Prostate gland (tissue), 2 donors: ENCODE measurements at regions of chr20 and their contacts with region 1.

Region 1: GRCh38 chr20:10553326-10553984 is 118.3 kb downstream of the SLX4IP start:
- DNase-seq: peak; percentile 72
- H3K4me3 ChIP-seq: no peak overlapping the region
- H3K27ac ChIP-seq: no peak overlapping the region
- H3K4me1 ChIP-seq: no peaks in the 10 kb centered on the region
- H3K27me3 ChIP-seq: no peaks in the 10 kb centered on the region
- CTCF ChIP-seq: peak; percentile 53 to 85 (median 78)
- POLR2A ChIP-seq: no peak

Region 2: DNA sequence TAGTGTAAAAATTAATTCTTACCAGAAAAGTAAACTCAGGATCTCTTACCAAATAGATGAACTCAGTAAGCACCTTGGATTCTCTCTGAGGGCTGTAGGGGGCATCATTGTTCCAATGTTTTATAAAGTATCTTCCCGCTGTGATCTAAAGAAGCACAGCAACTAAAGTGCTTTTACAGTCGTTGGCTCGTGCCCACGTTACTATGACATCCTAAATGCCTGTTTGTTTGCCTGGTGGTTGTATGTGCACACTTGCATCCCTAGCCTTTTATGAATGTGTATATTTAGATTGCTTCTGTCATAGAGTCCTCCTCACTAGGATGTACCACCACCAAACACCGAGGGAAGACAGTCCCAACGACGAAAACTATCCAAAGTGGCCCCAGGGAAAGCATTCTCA is 83.9 kb before region 1 on chr20:
- intact Hi-C with region 1: loop called (anchors 5 kb)
- DNase-seq: peak; percentile 85
- H3K4me3 ChIP-seq: no peak overlapping the region
- H3K27ac ChIP-seq: no peak overlapping the region
- H3K4me1 ChIP-seq: no peaks in the 10 kb centered on the region
- H3K27me3 ChIP-seq: no peaks in the 10 kb centered on the region
- CTCF ChIP-seq: peak in 3 of 4 experiments; percentile 71 to 85 (median 80)
- POLR2A ChIP-seq: no peak

Region 3: GRCh38 chr20:10596726-10597125 is 43.3 kb after region 1 on chr20:
- intact Hi-C with region 1: loop called (anchors 5 kb)
- DNase-seq: no peak
- H3K4me3 ChIP-seq: no peak overlapping the region
- H3K27ac ChIP-seq: no peak overlapping the region
- H3K4me1 ChIP-seq: peaks cover 3% of the 10 kb centered on the region
- H3K27me3 ChIP-seq: no peaks in the 10 kb centered on the region
- CTCF ChIP-seq: no peak
- POLR2A ChIP-seq: no peak

Region 4: DNA sequence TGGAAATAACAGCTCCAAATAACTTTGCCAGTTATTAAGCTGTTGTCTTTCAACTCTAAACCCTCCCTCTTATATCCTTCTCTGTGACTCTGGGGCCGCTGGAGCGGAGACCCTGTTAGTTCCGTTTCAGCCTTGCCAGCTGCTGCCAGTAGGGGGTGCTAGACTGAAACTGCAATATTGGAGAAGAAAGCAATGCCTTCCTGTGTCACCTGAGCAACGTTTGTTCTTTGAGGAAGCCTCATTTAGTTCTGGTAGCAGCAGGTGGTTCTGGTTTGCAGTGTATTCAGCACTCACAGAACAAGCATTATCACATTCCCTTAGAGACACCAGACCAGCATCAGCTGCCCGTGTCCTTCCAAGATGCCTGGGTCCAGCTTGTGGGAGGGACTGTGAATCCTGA is 143.2 kb after region 1 on chr20:
- intact Hi-C with region 1: no loop called
- DNase-seq: no peak
- H3K4me3 ChIP-seq: no peak overlapping the region
- H3K27ac ChIP-seq: no peak overlapping the region
- H3K4me1 ChIP-seq: no peaks in the 10 kb centered on the region
- H3K27me3 ChIP-seq: no peaks in the 10 kb centered on the region
- CTCF ChIP-seq: peak in 2 of 4 experiments; percentile 18 to 43
- POLR2A ChIP-seq: no peak

Region 5: GRCh38 chr20:11204926-11205768 is 651.7 kb after region 1 on chr20:
- intact Hi-C with region 1: loop called (anchors 10 kb)
- DNase-seq: peak; percentile 72
- H3K4me3 ChIP-seq: no peak overlapping the region
- H3K27ac ChIP-seq: peak overlapping the region in 1 of 2 donors; percentile 6
- H3K4me1 ChIP-seq: peaks cover 3% of the 10 kb centered on the region
- H3K27me3 ChIP-seq: no peaks in the 10 kb centered on the region
- CTCF ChIP-seq: peak; percentile 20 to 76 (median 70)
- POLR2A ChIP-seq: no peak

Region 6: DNA sequence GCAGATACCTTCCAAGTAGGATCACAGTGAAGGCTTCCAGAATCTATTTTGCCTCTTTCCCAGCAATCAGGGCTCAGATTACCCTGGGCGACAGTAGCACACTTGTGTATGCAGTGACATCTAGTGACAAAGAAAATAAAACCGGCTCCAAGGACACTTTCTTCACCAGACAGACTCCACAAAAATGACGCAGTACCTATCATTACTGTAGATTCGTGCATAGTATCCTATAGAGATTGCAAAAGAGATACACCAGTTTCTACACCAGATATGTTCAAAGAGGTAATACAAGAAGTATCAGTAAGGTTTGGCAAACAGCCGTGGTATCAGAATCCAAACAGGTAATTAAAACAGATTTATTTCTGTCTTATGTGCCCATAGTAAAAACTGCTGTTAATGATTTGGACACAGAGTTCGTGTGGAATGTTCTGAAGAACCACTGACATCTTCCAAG is 720.7 kb after region 1 on chr20:
- intact Hi-C with region 1: loop called (anchors 5 kb)
- DNase-seq: peak; percentile 54
- H3K4me3 ChIP-seq: no peak overlapping the region
- H3K27ac ChIP-seq: no peak overlapping the region
- H3K4me1 ChIP-seq: no peaks in the 10 kb centered on the region
- H3K27me3 ChIP-seq: no peaks in the 10 kb centered on the region
- CTCF ChIP-seq: peak in 3 of 4 experiments; percentile 47 to 69 (median 68)
- POLR2A ChIP-seq: no peak

Region 7: DNA sequence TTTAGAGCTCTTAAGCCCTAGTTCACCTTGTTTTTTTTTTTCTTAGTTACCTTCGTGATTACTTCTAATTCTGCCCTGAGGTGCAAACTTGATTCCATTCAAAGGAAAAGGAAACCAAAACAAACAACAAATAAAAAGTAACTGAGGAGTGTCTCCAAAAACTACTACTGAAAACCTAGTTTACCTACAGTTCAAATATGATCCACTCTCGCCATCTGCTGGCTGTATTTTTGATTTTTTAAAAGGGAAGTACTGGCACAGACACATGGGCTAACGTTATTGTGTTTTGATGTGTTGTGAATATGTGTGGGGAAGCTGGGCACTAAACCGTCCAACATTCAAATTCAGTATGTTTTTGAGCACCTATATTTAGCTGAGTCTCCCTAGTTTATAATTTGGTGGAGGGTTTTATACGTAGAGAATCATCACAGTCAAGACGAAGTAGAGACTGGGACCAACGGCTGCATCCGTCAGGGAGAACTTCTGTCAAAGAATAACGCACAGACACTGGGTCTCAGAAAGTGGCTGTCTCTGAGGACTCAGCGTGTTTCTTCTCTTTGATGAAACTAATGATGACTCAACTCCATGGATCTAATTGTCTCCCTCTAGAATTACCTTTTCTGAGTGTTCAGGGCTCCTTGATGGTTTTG is 990.7 kb after region 1 on chr20:
- intact Hi-C with region 1: loop called (anchors 5 kb)
- DNase-seq: peak; percentile 75
- H3K4me3 ChIP-seq: no peak overlapping the region
- H3K27ac ChIP-seq: no peak overlapping the region
- H3K4me1 ChIP-seq: no peaks in the 10 kb centered on the region
- H3K27me3 ChIP-seq: no peaks in the 10 kb centered on the region
- CTCF ChIP-seq: peak; percentile 40 to 78 (median 70)
- POLR2A ChIP-seq: no peak